Breast epithelium (tissue), 4 donors: ENCODE measurements at regions of chr10 and their contacts with region 1.

Region 1: DNA sequence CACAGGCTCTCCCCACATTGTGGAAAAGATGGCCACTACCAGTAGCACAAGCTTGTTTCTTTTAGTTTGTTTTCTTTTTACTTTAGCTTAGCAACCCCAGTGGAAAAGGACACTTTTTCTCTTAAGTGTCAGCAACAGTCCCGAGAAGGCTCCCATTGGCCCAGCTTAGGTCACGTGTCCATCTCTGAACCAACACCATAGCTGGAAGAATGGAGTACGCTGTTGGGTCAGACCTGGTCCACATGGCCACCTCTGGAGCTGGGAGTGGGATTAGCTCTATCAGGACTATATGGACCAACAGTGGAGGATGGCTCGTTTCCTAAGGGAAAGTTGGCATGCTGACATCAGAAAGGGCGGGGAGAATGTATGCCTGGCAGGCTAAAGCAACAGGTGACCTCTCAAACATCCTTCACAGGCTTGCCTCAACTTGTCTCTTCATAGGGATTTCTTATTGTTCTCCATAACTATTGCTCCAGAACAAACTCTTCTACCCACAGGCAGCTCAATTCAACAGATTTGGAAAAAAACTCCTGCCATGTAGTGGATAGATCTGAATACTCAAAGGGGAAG is 27.6 kb upstream of the NEUROG3 start:
- DNase-seq: no peak
- H3K4me3 ChIP-seq: no peak overlapping the region
- H3K27ac ChIP-seq: no peak overlapping the region
- H3K4me1 ChIP-seq: no peaks in the 10 kb centered on the region
- H3K27me3 ChIP-seq: peaks cover 0 to 3% of the 10 kb centered on the region in 2 donors
- CTCF ChIP-seq: no peak
- POLR2A ChIP-seq: no peak

Region 2: DNA sequence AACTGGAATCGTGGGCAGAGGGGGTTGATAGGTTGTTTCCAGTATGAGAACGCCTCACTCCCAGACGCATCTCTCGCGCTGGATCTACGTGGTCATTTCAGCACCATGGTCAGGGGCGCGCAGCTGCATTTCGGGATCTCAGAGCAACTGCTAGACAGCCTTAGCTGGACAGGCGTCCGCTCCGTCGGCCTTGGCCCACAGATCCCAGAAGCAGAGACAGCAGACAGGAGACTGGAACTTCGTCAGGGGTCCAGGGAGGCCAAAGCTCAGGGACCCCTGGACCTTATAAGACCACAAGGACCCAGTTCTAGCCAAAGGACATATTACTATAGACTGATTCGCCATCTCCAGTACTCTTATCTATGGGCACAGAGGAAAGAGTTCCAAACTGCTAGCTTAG is 32.9 kb before region 1 on chr10:
- intact Hi-C with region 1: loop called (anchors 2 kb)
- DNase-seq: no peak
- H3K4me3 ChIP-seq: no peak overlapping the region
- H3K27ac ChIP-seq: no peak overlapping the region
- H3K4me1 ChIP-seq: no peaks in the 10 kb centered on the region
- H3K27me3 ChIP-seq: peaks cover 4 to 84% of the 10 kb centered on the region in 2 donors
- CTCF ChIP-seq: no peak
- POLR2A ChIP-seq: no peak

Region 3: GRCh38 chr10:69703766-69704638 is 103.2 kb after region 1 on chr10:
- intact Hi-C with region 1: no loop called
- DNase-seq: no peak
- H3K4me3 ChIP-seq: no peak overlapping the region
- H3K27ac ChIP-seq: no peak overlapping the region
- H3K4me1 ChIP-seq: no peaks in the 10 kb centered on the region
- H3K27me3 ChIP-seq: no peaks in the 10 kb centered on the region
- CTCF ChIP-seq: no peak
- POLR2A ChIP-seq: no peak